ENCODE measurements at regions of chr11 and their contacts with region 1.

Region 1: DNA sequence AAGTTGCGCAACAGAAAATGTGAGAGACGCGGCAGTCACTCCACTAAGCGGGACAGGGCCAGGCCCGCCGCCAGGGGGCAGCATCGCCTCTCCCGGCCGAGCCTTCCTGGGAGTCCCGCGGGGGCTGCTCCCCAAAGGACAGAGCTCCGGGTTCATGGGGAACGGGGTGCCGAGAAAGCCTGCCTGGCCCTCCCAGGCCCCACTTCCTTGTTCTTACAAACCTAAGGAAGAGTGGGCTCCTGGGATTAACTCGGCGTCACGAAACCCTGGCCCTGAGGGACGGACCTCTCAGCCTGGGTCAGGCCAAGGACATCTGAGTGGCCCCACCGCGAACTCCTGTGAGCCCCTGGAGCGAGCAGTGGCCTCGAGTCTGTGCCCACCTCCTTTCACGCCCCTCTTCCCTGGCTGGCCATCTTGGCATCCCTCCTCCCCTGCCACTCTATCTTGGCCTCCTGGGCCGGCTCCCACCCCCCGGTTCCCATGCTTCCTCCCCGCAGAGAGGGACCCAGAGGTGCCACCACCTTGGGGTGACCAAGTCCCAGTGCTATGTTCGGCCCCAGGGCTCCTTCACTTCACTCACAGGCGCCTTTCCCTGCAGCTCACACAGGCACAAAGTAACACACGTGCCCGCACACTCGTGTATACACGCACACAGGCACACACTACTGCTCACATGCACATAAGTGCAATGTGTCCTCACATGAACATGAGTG is 99.9 kb upstream of the FGF3 start:
- DNase-seq: peak; percentile 56 to 80
- H3K4me3 ChIP-seq: peak overlapping the region; percentile 16; the same call in 1 of the 2 replicates
- H3K27ac ChIP-seq: no peak overlapping the region
- H3K4me1 ChIP-seq: peaks cover 56% of the 10 kb centered on the region
- H3K27me3 ChIP-seq: no peaks in the 10 kb centered on the region
- CTCF ChIP-seq: peak; percentile 98

Region 2: GRCh38 chr11:69825037-69825834 is 93.9 kb before region 1 on chr11:
- CTCF ChIA-PET with region 1: no interaction called
- POLR2A ChIA-PET with region 1: no interaction called
- intact Hi-C with region 1: no loop called
- DNase-seq: peak; percentile 83 to 89
- H3K4me3 ChIP-seq: peak overlapping the region; percentile 13; the same call in 1 of the 2 replicates
- H3K27ac ChIP-seq: no peak overlapping the region
- H3K4me1 ChIP-seq: peaks cover 16% of the 10 kb centered on the region
- H3K27me3 ChIP-seq: no peaks in the 10 kb centered on the region
- CTCF ChIP-seq: no peak

Region 3: DNA sequence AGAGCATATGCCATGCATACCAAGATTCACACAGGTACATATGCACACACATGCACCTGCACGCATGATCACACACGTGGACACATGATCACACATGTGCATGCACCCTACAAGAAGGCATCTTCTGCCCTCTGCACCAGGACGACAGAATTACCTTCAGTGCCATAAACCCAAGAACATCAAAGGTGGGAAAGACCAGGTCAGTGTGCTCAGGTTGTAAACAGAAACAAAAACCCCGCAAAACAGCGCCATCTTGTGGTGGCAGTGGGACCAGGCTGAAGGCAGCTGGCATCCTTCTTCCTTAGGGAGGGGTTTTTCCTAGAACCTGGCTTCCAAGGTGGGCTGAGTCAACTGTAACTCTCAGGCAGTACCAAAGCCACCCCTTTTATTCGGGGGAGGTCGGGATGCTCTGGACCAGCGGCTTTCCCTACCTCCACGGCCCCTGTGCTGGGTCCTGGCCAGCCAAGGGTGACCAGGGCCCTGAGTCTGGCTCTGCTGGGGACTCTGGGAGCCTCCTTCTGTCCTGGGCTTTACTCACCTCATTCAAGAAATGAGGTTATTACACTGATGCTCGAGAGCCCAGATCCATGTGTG is 30.5 kb before region 1 on chr11:
- CTCF ChIA-PET with region 1: interaction called, 4 read pairs
- POLR2A ChIA-PET with region 1: interaction called, 10 read pairs
- intact Hi-C with region 1: no loop called
- DNase-seq: peak; percentile 70 to 85
- H3K4me3 ChIP-seq: no peak overlapping the region
- H3K27ac ChIP-seq: no peak overlapping the region
- H3K4me1 ChIP-seq: peaks cover 41% of the 10 kb centered on the region
- H3K27me3 ChIP-seq: no peaks in the 10 kb centered on the region
- CTCF ChIP-seq: peak; percentile 97

Region 4: GRCh38 chr11:70067591-70068341 is 148.7 kb after region 1 on chr11:
- CTCF ChIA-PET with region 1: no interaction called
- POLR2A ChIA-PET with region 1: no interaction called
- intact Hi-C with region 1: loop called (anchors 2 kb)
- DNase-seq: peak; percentile 81 to 98
- H3K4me3 ChIP-seq: peak overlapping the region; percentile 50
- H3K27ac ChIP-seq: peak overlapping the region; percentile 86
- H3K4me1 ChIP-seq: peaks cover 91% of the 10 kb centered on the region
- H3K27me3 ChIP-seq: no peaks in the 10 kb centered on the region
- CTCF ChIP-seq: peak; percentile 48; the same call in 1 of the 2 replicates

Region 5: GRCh38 chr11:70141486-70142220 is 222.6 kb after region 1 on chr11:
- CTCF ChIA-PET with region 1: no interaction called
- POLR2A ChIA-PET with region 1: no interaction called
- intact Hi-C with region 1: loop called (anchors 5 kb)
- DNase-seq: no peak
- H3K4me3 ChIP-seq: no peak overlapping the region
- H3K27ac ChIP-seq: peak overlapping the region; percentile 52
- H3K4me1 ChIP-seq: peaks cover 33% of the 10 kb centered on the region
- H3K27me3 ChIP-seq: no peaks in the 10 kb centered on the region
- CTCF ChIP-seq: no peak

Region 6: GRCh38 chr11:70191495-70192140 is 272.5 kb after region 1 on chr11:
- CTCF ChIA-PET with region 1: interaction called, 3 read pairs
- POLR2A ChIA-PET with region 1: no interaction called
- intact Hi-C with region 1: loop called (anchors 1 kb)
- DNase-seq: peak; percentile 62 to 90
- H3K4me3 ChIP-seq: no peak overlapping the region
- H3K27ac ChIP-seq: no peak overlapping the region
- H3K4me1 ChIP-seq: peaks cover 13% of the 10 kb centered on the region; the same call in 1 of the 2 replicates
- H3K27me3 ChIP-seq: no peaks in the 10 kb centered on the region
- CTCF ChIP-seq: peak; percentile 93